CD4-positive, alpha-beta memory T cell (primary cell): ENCODE measurements at regions of chr19 and their contacts with region 1.

Region 1: DNA sequence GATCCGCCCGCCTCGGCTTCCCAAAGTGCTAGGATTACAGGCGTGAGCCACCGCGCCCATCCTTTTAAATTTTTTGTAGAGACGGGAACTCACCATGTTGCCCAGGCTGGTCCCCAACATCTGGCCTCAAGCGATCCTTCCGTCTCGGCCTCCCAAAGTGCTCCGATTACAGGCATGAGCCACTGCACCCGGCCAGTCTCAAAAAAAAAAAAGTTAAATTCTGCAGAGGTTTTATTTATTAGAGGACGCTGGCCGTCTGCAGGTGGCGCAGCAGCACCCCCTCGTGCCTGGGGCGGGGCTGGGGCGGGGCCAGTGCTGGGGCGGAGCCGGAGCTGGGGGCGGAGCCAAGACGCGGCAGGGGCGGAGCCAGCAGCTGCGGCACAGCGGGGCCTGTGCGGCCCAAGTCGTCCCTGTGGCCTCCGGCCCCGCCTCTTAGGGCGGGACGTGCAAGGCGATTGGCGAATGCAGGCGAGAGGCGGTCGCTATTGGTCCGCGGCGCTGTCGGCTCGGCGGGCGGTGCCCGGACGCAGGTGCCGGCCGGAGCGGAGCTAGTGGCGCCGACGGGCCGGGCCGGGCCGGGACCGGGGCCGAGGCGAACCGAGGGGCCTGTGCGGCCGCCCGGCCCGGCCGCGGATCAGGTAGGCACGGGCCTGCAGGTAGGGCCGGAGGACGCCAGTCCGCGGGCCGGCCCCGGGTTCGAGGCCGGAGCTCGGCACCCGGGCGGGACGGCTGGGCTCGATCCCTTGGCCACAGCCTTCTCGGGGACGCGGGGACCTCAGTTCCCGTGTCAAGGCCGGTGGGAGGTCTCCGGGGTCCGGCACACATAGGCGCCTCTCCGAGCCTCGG is at the start of gene MARCHF2:
- DNase-seq: peak; percentile 93 to 96 (median 95)
- H3K4me3 ChIP-seq: peak within 1 kb of the TSS; percentile 36 to 60
- H3K4me3 Mint-ChIP-seq: peak within 1 kb of the TSS; percentile 54 to 83 (median 78)
- H3K27ac ChIP-seq: peak within 1 kb of the TSS; percentile 55
- H3K27ac Mint-ChIP-seq: peak within 1 kb of the TSS in 5 of 7 donors; percentile 37 to 82 (median 53)
- H3K4me1 ChIP-seq: peaks cover 19% of the 10 kb centered on the region
- H3K4me1 Mint-ChIP-seq: peaks cover 8 to 15% (median 10%) of the 10 kb centered on the region in 4 donors
- H3K27me3 ChIP-seq: no peaks in the 10 kb centered on the region
- H3K27me3 Mint-ChIP-seq: no peaks in the 10 kb centered on the region
- total RNA-seq, gene MARCHF2: 25.5 to 30.3 TPM

Region 2: DNA sequence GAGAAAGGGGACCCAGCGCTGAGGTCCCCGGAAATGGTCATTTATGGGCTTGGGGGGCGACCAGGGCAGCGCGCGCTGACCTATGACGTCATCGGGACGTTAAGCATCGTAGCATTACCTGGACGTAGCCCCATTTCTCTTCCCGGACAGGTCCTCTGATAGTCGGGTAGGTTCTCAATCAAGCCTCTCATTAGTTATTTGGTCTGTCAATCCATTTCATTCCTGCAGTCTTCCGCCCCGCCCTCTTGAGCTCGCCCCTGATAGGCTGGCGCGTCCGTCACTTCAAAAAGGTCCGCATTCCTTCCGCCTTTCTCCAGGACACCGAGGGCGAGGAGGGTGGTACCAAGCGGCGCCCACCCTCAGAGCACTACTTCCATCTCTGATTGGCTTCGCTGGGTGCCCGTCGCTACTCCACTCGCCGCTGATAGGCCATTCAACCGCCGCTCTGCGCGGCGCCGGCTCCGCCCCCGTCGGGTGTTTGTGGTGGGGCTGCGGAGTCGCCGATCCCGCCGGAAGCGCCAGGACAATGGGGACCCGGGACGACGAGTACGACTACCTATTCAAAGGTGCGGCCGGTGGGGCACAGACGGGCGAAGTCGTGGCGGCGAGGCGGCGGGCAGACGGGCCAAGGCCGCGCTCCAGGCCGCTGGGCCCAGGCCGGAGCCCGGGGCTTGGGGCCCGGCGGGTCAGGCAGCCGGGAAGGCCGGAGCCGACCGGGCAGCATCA is 23.0 kb before region 1 on chr19 and contains the start of gene RAB11B:
- CTCF ChIA-PET with region 1: interaction called, 19 read pairs
- POLR2A ChIA-PET with region 1: interaction called, 26 read pairs
- intact Hi-C with region 1: loop called (anchors 1 kb)
- DNase-seq: peak; percentile 96 to 99 (median 99)
- H3K4me3 ChIP-seq: peak within 1 kb of the TSS; percentile 65 to 81
- H3K4me3 Mint-ChIP-seq: peak within 1 kb of the TSS; percentile 89 to 97 (median 93)
- H3K27ac ChIP-seq: peak within 1 kb of the TSS; percentile 96
- H3K27ac Mint-ChIP-seq: peak within 1 kb of the TSS; percentile 91 to 99 (median 97)
- H3K4me1 ChIP-seq: peaks cover 22% of the 10 kb centered on the region
- H3K4me1 Mint-ChIP-seq: peaks cover 9 to 37% (median 29%) of the 10 kb centered on the region in 4 donors
- H3K27me3 ChIP-seq: no peaks in the 10 kb centered on the region
- H3K27me3 Mint-ChIP-seq: no peaks in the 10 kb centered on the region
- total RNA-seq, gene RAB11B: 107 to 109 TPM

Region 3: GRCh38 chr19:8423817-8424223 is 10.8 kb after region 1 on chr19:
- CTCF ChIA-PET with region 1: interaction called, 11 read pairs
- POLR2A ChIA-PET with region 1: no interaction called
- intact Hi-C with region 1: no loop called
- DNase-seq: no peak
- H3K4me3 ChIP-seq: no peak overlapping the region
- H3K4me3 Mint-ChIP-seq: no peak overlapping the region
- H3K27ac ChIP-seq: no peak overlapping the region
- H3K27ac Mint-ChIP-seq: no peak overlapping the region
- H3K4me1 ChIP-seq: no peaks in the 10 kb centered on the region
- H3K4me1 Mint-ChIP-seq: no peaks in the 10 kb centered on the region
- H3K27me3 ChIP-seq: no peaks in the 10 kb centered on the region
- H3K27me3 Mint-ChIP-seq: no peaks in the 10 kb centered on the region

Region 4: GRCh38 chr19:8444645-8445487 is 31.9 kb after region 1 on chr19 and contains the start of gene HNRNPM:
- CTCF ChIA-PET with region 1: interaction called, 7 read pairs
- POLR2A ChIA-PET with region 1: interaction called, 52 read pairs
- intact Hi-C with region 1: loop called (anchors 1 kb)
- DNase-seq: peak; percentile 99 to 100 (median 100)
- H3K4me3 ChIP-seq: peak within 1 kb of the TSS; percentile 26 to 85
- H3K4me3 Mint-ChIP-seq: peak within 1 kb of the TSS; percentile 95 to 99 (median 97)
- H3K27ac ChIP-seq: peak within 1 kb of the TSS; percentile 99
- H3K27ac Mint-ChIP-seq: peak within 1 kb of the TSS; percentile 91 to 99 (median 98)
- H3K4me1 ChIP-seq: peaks cover 40% of the 10 kb centered on the region
- H3K4me1 Mint-ChIP-seq: peaks cover 28 to 51% (median 36%) of the 10 kb centered on the region in 4 donors
- H3K27me3 ChIP-seq: no peaks in the 10 kb centered on the region
- H3K27me3 Mint-ChIP-seq: no peaks in the 10 kb centered on the region
- total RNA-seq, gene HNRNPM: 197 to 199 TPM

Region 5: DNA sequence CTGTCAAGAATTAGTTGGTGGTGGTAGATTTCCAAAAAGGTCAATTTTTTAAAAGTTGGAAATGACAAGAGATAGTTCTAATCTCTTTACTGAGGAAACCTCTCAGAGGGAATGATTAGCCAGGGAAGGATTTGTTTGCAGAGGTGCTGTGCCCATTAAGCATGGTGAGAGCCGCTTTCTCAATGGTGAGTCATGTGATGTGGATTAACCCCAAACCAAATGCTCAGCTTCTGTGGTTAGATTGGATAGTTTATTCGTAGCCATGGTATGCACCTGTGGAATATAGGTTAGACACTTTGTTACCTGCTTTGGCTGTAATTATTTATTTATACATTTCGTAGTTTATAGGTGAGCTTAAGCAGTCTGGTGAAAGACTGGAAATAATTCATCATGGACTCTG is 38.9 kb after region 1 on chr19:
- CTCF ChIA-PET with region 1: interaction called, 6 read pairs
- POLR2A ChIA-PET with region 1: interaction called, 52 read pairs
- intact Hi-C with region 1: no loop called
- DNase-seq: peak in 2 of 5 donors; percentile 29 to 59
- H3K4me3 ChIP-seq: no peak overlapping the region
- H3K4me3 Mint-ChIP-seq: peak overlapping the region; percentile 21 to 78 (median 61)
- H3K27ac ChIP-seq: no peak overlapping the region
- H3K27ac Mint-ChIP-seq: peak overlapping the region in 2 of 7 donors; percentile 35 to 78
- H3K4me1 ChIP-seq: peaks cover 87% of the 10 kb centered on the region
- H3K4me1 Mint-ChIP-seq: peaks cover 61 to 93% (median 80%) of the 10 kb centered on the region in 4 donors
- H3K27me3 ChIP-seq: no peaks in the 10 kb centered on the region
- H3K27me3 Mint-ChIP-seq: no peaks in the 10 kb centered on the region

Region 6: DNA sequence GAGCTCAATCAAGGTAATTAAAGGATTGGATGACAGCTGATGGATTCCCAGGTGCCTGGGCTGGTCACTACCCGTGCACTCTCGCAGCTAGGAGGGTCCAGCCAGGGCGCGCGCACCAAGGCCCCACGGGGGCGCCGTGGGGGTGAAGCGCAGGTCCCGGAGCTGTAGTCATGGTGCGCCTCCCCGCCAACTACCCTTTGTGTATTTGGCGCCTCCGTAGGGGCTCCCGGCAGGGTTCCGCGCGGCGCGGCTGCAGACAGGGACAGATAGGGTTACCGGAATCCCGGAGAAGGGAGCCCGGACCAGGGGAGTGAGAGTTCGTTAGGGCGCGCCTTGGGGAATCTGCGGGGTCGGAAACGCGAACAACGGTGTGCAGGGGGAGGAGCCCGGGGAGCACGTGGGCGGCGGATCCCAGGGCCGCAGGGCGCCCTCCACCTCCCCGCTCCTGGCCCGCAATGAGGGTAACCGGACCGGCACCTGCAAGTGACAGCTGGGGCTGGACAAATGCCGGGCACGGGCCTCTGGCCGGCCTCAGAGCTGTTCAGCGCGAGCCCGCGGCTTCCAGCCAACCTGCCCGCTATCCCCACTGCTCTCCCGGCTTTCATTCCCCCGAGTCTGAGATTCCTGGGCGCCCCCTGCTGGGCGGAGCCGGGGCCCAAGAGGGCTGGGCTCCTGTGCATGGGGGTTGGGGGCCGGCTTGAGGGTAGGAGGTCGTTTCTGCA is 92.8 kb after region 1 on chr19:
- CTCF ChIA-PET with region 1: interaction called, 12 read pairs
- POLR2A ChIA-PET with region 1: no interaction called
- intact Hi-C with region 1: loop called (anchors 2 kb)
- DNase-seq: peak; percentile 44 to 71 (median 60)
- H3K4me3 ChIP-seq: peak overlapping the region; percentile 52 to 57
- H3K4me3 Mint-ChIP-seq: peak overlapping the region; percentile 88 to 95 (median 91)
- H3K27ac ChIP-seq: peak overlapping the region; percentile 22
- H3K27ac Mint-ChIP-seq: peak overlapping the region; percentile 74 to 94 (median 87)
- H3K4me1 ChIP-seq: peaks cover 13% of the 10 kb centered on the region
- H3K4me1 Mint-ChIP-seq: peaks cover 4 to 33% (median 9%) of the 10 kb centered on the region in 4 donors
- H3K27me3 ChIP-seq: no peaks in the 10 kb centered on the region
- H3K27me3 Mint-ChIP-seq: no peaks in the 10 kb centered on the region

Region 7: GRCh38 chr19:8585894-8586750 is 173.1 kb after region 1 on chr19:
- CTCF ChIA-PET with region 1: interaction called, 93 read pairs
- POLR2A ChIA-PET with region 1: interaction called, 5 read pairs
- intact Hi-C with region 1: no loop called
- DNase-seq: peak; percentile 49 to 59 (median 53)
- H3K4me3 ChIP-seq: no peak overlapping the region
- H3K4me3 Mint-ChIP-seq: no peak overlapping the region
- H3K27ac ChIP-seq: no peak overlapping the region
- H3K27ac Mint-ChIP-seq: peak overlapping the region in 1 of 7 donors; percentile 42
- H3K4me1 ChIP-seq: peaks cover under 1% of the 10 kb centered on the region
- H3K4me1 Mint-ChIP-seq: peaks cover 0 to 5% (median 2%) of the 10 kb centered on the region in 4 donors
- H3K27me3 ChIP-seq: no peaks in the 10 kb centered on the region
- H3K27me3 Mint-ChIP-seq: no peaks in the 10 kb centered on the region